ENCODE measurements at regions of chr20 and their contacts with region 1.

Region 1: DNA sequence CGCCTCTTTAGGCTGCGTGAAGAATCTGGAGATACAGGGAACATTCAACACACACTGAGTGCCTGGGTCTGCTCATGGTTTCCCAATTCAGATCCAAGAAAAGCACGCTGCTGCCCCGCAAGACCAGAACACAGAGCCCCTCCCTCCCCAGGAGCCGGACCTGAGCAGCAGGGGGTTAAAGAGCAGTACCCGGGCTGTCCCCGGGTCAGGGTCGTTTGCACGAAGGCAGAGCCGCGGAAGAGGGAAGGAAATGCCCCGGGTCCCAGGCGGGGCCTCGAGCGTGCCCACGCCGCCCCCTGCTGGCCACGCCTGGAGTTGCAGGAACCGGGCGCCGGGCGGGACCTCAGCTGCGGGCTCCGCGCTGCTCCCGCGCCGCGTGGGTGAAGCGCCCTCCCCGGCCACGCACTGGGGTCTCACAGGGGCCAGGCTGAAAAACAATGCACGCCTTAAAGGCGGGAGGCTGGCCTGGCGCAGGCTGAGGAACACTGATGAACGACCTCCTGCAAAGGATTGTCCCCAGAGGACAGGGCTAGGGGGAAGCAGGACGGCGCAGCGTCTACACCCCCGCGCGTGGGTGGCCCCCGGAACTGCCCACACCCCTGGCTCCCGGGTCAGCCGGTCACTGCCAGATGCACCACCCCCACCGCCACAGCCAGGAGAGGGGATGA is 48.9 kb downstream of the ANKRD60 start:
- DNase-seq: peak; percentile 60
- H3K4me3 Mint-ChIP-seq: peak overlapping the region; percentile 45
- H3K27ac Mint-ChIP-seq: no peak overlapping the region
- H3K4me1 Mint-ChIP-seq: no peaks in the 10 kb centered on the region
- H3K27me3 Mint-ChIP-seq: peaks cover 8% of the 10 kb centered on the region

Region 2: GRCh38 chr20:57654363-57654997 is 525.1 kb before region 1 on chr20:
- intact Hi-C with region 1: loop called (anchors 1 kb)
- DNase-seq: peak; percentile 31
- H3K4me3 Mint-ChIP-seq: no peak overlapping the region
- H3K27ac Mint-ChIP-seq: no peak overlapping the region
- H3K4me1 Mint-ChIP-seq: peaks cover 5% of the 10 kb centered on the region
- H3K27me3 Mint-ChIP-seq: no peaks in the 10 kb centered on the region

Region 3: DNA sequence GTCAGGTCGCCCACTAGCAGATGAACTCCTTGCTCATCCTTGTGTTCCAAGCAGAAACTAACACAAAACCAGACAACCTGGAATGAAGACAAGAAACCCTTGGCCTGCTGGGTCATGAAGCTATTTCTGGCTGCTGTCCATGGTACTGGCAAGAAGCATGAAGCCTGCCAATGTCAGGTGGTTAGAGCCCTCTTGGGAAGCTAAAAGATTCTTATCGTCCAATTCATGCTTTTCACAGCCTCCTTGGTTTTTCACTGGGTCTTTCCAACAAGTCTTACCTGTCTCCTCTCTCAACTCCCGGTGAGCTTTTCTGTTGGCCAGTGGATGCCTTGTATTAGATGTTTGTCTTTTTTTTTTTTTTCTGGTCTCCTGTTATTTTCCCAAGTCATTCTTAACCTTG is 131.4 kb before region 1 on chr20:
- intact Hi-C with region 1: no loop called
- DNase-seq: no peak
- H3K4me3 Mint-ChIP-seq: no peak overlapping the region
- H3K27ac Mint-ChIP-seq: no peak overlapping the region
- H3K4me1 Mint-ChIP-seq: no peaks in the 10 kb centered on the region
- H3K27me3 Mint-ChIP-seq: no peaks in the 10 kb centered on the region

Region 4: GRCh38 chr20:58330687-58331086 is 151.1 kb after region 1 on chr20:
- intact Hi-C with region 1: no loop called
- DNase-seq: no peak
- H3K4me3 Mint-ChIP-seq: no peak overlapping the region
- H3K27ac Mint-ChIP-seq: no peak overlapping the region
- H3K4me1 Mint-ChIP-seq: peaks cover 24% of the 10 kb centered on the region
- H3K27me3 Mint-ChIP-seq: no peaks in the 10 kb centered on the region

Measured in activated T-helper 2 cell treated with anti-CD3 and anti-CD28 coated beads, Interferon-gamma antibody, Interleukin-2, Interleukin-4, amounts not matched to agents 10 μg/mL and 5 μg/mL and 100 μg/mL, durations not matched to agents 14 hours and 24 hours and 36 hours (primary cell).